PC-3 (cell line): ENCODE measurements at regions of chrX and their contacts with region 1.

Region 1: DNA sequence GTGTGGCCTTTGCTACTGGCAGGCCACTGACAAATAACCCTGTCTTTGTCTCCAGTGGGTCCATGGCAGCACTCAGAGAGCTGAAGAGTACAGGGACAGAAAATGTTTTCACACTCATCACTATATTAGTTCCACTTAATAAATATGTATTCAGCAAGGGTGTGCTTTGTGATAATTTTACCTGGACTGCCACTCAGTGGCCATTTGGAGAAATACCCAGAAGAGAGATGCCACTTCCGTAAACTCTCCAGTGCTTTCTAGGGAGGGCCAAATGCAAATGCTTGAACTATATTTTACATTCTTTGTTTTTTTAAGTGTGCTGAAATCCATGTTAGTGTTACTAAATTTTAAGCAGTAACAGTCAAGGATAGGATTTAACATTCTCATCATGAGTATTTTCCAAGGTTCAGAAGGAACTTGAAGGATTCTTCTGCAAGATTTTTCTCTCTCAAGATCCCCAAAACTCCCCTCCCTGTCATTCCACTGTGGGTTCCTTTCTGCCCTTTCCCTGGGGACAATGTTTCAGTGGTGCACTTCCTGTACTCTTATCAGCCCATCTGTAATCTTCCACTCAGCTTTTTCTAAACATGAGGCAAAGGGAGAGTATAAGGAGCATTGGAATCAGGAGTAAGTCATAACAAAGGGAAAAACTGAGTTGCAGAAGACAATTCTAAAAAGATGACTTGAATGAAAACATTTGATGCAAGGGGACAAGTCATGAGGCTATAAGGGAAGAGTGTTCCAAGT is 46.0 kb downstream of the TFDP3 start:
- DNase-seq: peak; percentile 65
- ATAC-seq: peak; percentile 87
- H3K4me3 ChIP-seq: no peak overlapping the region
- H3K27ac ChIP-seq: no peak overlapping the region
- H3K4me1 ChIP-seq: peaks cover 12% of the 10 kb centered on the region
- H3K27me3 ChIP-seq: no peaks in the 10 kb centered on the region
- CTCF ChIP-seq: peak; percentile 78

Region 2: GRCh38 chrX:132968296-132968949 is 203.7 kb before region 1 on chrX:
- CTCF ChIA-PET with region 1: no interaction called
- POLR2A ChIA-PET with region 1: no interaction called
- intact Hi-C with region 1: loop called (anchors 10 kb)
- DNase-seq: no peak
- ATAC-seq: no peak; the same call in 1 of the 2 replicates
- H3K4me3 ChIP-seq: no peak overlapping the region
- H3K27ac ChIP-seq: no peak overlapping the region
- H3K4me1 ChIP-seq: no peaks in the 10 kb centered on the region
- H3K27me3 ChIP-seq: no peaks in the 10 kb centered on the region
- CTCF ChIP-seq: no peak

Region 3: GRCh38 chrX:133045986-133046385 is 126.1 kb before region 1 on chrX:
- CTCF ChIA-PET with region 1: interaction called, 4 read pairs
- POLR2A ChIA-PET with region 1: no interaction called
- intact Hi-C with region 1: loop called (anchors 1 kb)
- DNase-seq: peak; percentile 60
- ATAC-seq: peak; percentile 76
- H3K4me3 ChIP-seq: no peak overlapping the region
- H3K27ac ChIP-seq: no peak overlapping the region
- H3K4me1 ChIP-seq: no peaks in the 10 kb centered on the region
- H3K27me3 ChIP-seq: no peaks in the 10 kb centered on the region
- CTCF ChIP-seq: peak; percentile 80

Region 4: GRCh38 chrX:133215747-133216146 is 43.6 kb after region 1 on chrX:
- CTCF ChIA-PET with region 1: no interaction called
- POLR2A ChIA-PET with region 1: no interaction called
- intact Hi-C with region 1: loop called (anchors 5 kb)
- DNase-seq: peak; percentile 53
- ATAC-seq: peak; percentile 70
- H3K4me3 ChIP-seq: no peak overlapping the region
- H3K27ac ChIP-seq: no peak overlapping the region
- H3K4me1 ChIP-seq: no peaks in the 10 kb centered on the region
- H3K27me3 ChIP-seq: no peaks in the 10 kb centered on the region
- CTCF ChIP-seq: peak; percentile 69

Region 5: DNA sequence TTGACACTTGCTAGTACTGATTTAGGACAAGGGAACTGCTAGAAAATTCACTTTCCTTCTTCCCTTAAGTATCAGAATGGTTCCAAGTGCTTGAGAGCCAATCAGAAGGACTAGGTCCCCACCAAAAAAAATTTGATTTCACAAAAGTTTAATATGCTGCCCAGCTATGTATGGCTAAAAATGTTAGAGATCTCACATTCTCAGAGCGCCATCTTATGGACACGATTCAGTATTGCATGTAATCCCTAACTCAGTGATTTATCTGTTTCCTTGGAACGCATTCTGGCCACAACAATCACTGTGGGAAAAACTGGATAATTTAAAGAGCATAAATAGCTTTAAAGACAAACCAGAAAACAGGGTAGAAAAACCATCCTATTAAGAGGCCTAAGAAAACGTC is 498.2 kb after region 1 on chrX:
- CTCF ChIA-PET with region 1: no interaction called
- POLR2A ChIA-PET with region 1: no interaction called
- intact Hi-C with region 1: loop called (anchors 5 kb)
- DNase-seq: peak; percentile 72
- ATAC-seq: peak; percentile 42
- H3K4me3 ChIP-seq: no peak overlapping the region
- H3K27ac ChIP-seq: no peak overlapping the region
- H3K4me1 ChIP-seq: peaks cover 25% of the 10 kb centered on the region
- H3K27me3 ChIP-seq: no peaks in the 10 kb centered on the region
- CTCF ChIP-seq: peak; percentile 82